CD4-positive, alpha-beta T cell (primary cell): ENCODE measurements at regions of chr1 and their contacts with region 1.

Region 1: DNA sequence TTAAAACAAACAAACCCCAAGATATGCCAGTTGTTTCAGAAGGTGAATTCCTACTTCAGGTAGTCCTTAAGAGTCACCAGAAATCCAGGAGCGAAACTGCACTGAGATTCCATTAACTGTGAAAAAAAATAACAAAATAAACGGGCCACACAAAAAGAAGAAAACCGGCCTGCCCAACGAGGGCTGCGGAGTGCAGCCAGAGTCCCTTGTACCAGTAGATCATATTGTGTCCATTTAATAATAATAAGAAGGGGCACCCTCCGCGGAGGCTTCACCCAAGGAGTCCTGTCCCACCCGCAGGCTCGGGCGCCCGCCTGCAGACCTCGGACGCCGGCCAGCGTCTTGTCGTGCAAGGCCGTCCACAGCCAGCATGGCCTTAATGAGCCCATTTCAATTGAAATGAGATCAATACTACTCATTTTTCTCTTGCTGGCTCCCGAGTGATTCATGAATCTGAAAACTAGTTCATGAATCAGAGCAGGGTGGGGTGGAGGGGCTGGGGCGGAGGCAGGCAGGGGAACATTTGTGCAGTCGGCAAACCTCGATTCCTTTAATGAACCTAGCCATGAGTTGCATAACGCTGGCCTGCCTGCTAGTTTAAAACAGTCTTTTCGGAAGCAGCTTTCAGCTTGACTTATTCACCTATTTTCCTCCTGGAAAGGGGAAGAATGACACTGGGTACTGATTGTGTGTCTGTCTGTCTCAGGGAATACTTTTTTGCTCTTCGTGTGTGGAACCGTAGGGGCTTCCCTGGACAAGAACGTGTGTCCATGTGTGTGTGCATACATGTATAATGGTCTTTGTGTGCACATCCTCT is 113.1 kb upstream of the IRF2BP2 start:
- DNase-seq: peak in 13 of 14 experiments; percentile 23 to 81 (median 51)
- ATAC-seq: peak; percentile 9
- H3K4me3 ChIP-seq: peak overlapping the region; percentile 33
- H3K4me3 Mint-ChIP-seq: peak overlapping the region; percentile 76
- H3K27ac ChIP-seq: peak overlapping the region; percentile 94 to 98
- H3K27ac Mint-ChIP-seq: peak overlapping the region; percentile 93
- H3K4me1 ChIP-seq: peaks cover 56% of the 10 kb centered on the region
- H3K4me1 Mint-ChIP-seq: peaks cover 93% of the 10 kb centered on the region
- H3K27me3 ChIP-seq: no peaks in the 10 kb centered on the region
- H3K27me3 Mint-ChIP-seq: no peaks in the 10 kb centered on the region
- CTCF ChIP-seq: no peak

Region 2: GRCh38 chr1:234758851-234759250 is 35.7 kb after region 1 on chr1:
- CTCF ChIA-PET with region 1: interaction called, 3 read pairs
- POLR2A ChIA-PET with region 1: interaction called, 4 read pairs
- intact Hi-C with region 1: loop called in 1 of 2 experiments (anchors 1 kb)
- DNase-seq: peak in 10 of 14 experiments; percentile 19 to 90 (median 46)
- ATAC-seq: peak; percentile 85
- H3K4me3 ChIP-seq: no peak overlapping the region
- H3K4me3 Mint-ChIP-seq: peak overlapping the region; percentile 31
- H3K27ac ChIP-seq: no peak overlapping the region
- H3K27ac Mint-ChIP-seq: peak overlapping the region; percentile 93
- H3K4me1 ChIP-seq: peaks cover 37% of the 10 kb centered on the region
- H3K4me1 Mint-ChIP-seq: peaks cover 58% of the 10 kb centered on the region
- H3K27me3 ChIP-seq: no peaks in the 10 kb centered on the region
- H3K27me3 Mint-ChIP-seq: no peaks in the 10 kb centered on the region
- CTCF ChIP-seq: no peak

Region 3: GRCh38 chr1:234772345-234773147 is 49.4 kb after region 1 on chr1:
- CTCF ChIA-PET with region 1: interaction called, 3 read pairs
- POLR2A ChIA-PET with region 1: interaction called, 32 read pairs
- intact Hi-C with region 1: loop called (anchors 1 to 2 kb)
- DNase-seq: peak; percentile 56 to 95 (median 78)
- ATAC-seq: peak; percentile 82
- H3K4me3 ChIP-seq: peak overlapping the region; percentile 21
- H3K4me3 Mint-ChIP-seq: peak overlapping the region; percentile 42
- H3K27ac ChIP-seq: peak overlapping the region; percentile 59 to 72
- H3K27ac Mint-ChIP-seq: peak overlapping the region; percentile 87
- H3K4me1 ChIP-seq: peaks cover 53% of the 10 kb centered on the region
- H3K4me1 Mint-ChIP-seq: peaks cover 56% of the 10 kb centered on the region
- H3K27me3 ChIP-seq: peaks cover 4 to 12% of the 10 kb centered on the region in 2 experiments
- H3K27me3 Mint-ChIP-seq: no peaks in the 10 kb centered on the region
- CTCF ChIP-seq: no peak

Region 4: GRCh38 chr1:234842726-234843641 is 119.9 kb after region 1 on chr1:
- CTCF ChIA-PET with region 1: interaction called, 4 read pairs
- POLR2A ChIA-PET with region 1: interaction called, 18 read pairs
- intact Hi-C with region 1: loop called in 1 of 2 experiments (anchors 1 kb)
- DNase-seq: peak; percentile 20 to 82 (median 42)
- ATAC-seq: peak; percentile 31
- H3K4me3 ChIP-seq: peak overlapping the region; percentile 10
- H3K4me3 Mint-ChIP-seq: peak overlapping the region; percentile 9
- H3K27ac ChIP-seq: no peak overlapping the region
- H3K27ac Mint-ChIP-seq: peak overlapping the region; percentile 81
- H3K4me1 ChIP-seq: peaks cover 41% of the 10 kb centered on the region
- H3K4me1 Mint-ChIP-seq: peaks cover 78% of the 10 kb centered on the region
- H3K27me3 ChIP-seq: no peaks in the 10 kb centered on the region
- H3K27me3 Mint-ChIP-seq: no peaks in the 10 kb centered on the region
- CTCF ChIP-seq: no peak

Region 5: GRCh38 chr1:234925440-234926263 is 202.5 kb after region 1 on chr1:
- CTCF ChIA-PET with region 1: no interaction called
- POLR2A ChIA-PET with region 1: interaction called, 6 read pairs
- intact Hi-C with region 1: loop called in 1 of 2 experiments (anchors 10 kb)
- DNase-seq: peak in 4 of 14 experiments; percentile 48 to 67 (median 62)
- ATAC-seq: peak; percentile 58
- H3K4me3 ChIP-seq: peak overlapping the region; percentile 43
- H3K4me3 Mint-ChIP-seq: peak overlapping the region; percentile 42
- H3K27ac ChIP-seq: no peak overlapping the region
- H3K27ac Mint-ChIP-seq: peak overlapping the region; percentile 76
- H3K4me1 ChIP-seq: peaks cover 60% of the 10 kb centered on the region
- H3K4me1 Mint-ChIP-seq: peaks cover 55% of the 10 kb centered on the region
- H3K27me3 ChIP-seq: no peaks in the 10 kb centered on the region
- H3K27me3 Mint-ChIP-seq: no peaks in the 10 kb centered on the region
- CTCF ChIP-seq: no peak